Activated CD4-positive, alpha-beta T cell treated with anti-CD3 and anti-CD28 coated beads, Interleukin-2, amount 10 ng/mL, durations not matched to agents 24 days and 14 days (primary cell): ENCODE measurements at regions of chr11 and their contacts with region 1.

Region 1: GRCh38 chr11:4187055-4187988 is 92.7 kb downstream of the RRM1 start:
- DNase-seq: peak; percentile 96
- H3K4me3 Mint-ChIP-seq: peak overlapping the region; percentile 87
- H3K27ac Mint-ChIP-seq: peak overlapping the region; percentile 53
- H3K4me1 Mint-ChIP-seq: peaks cover 7% of the 10 kb centered on the region
- H3K27me3 Mint-ChIP-seq: peaks cover 2% of the 10 kb centered on the region

Region 2: DNA sequence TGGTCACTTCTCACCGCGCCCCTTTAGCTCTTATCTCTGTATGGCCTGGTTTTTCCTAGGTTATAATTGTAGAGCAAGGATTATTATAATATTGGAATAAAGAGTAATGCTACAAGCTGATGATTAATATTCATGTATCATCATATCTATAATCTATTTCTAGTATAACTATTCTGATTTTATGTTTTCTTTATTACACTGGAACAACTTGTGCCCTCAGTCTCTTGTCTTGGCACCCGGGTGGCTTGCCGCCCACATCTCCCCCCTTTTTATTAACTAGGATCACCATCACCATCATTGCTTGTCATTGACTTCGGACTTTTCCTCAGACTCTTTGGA is 306.1 kb after region 1 on chr11:
- intact Hi-C with region 1: loop called (anchors 1 kb)
- DNase-seq: no peak
- H3K4me3 Mint-ChIP-seq: no peak overlapping the region
- H3K27ac Mint-ChIP-seq: no peak overlapping the region
- H3K4me1 Mint-ChIP-seq: peaks cover 8% of the 10 kb centered on the region
- H3K27me3 Mint-ChIP-seq: peaks cover 18% of the 10 kb centered on the region

Region 3: GRCh38 chr11:4539603-4540219 is 352.4 kb after region 1 on chr11:
- intact Hi-C with region 1: loop called (anchors 1 kb)
- DNase-seq: peak; percentile 86
- H3K4me3 Mint-ChIP-seq: no peak overlapping the region
- H3K27ac Mint-ChIP-seq: no peak overlapping the region
- H3K4me1 Mint-ChIP-seq: peaks cover 1% of the 10 kb centered on the region
- H3K27me3 Mint-ChIP-seq: peaks cover 18% of the 10 kb centered on the region

Region 4: DNA sequence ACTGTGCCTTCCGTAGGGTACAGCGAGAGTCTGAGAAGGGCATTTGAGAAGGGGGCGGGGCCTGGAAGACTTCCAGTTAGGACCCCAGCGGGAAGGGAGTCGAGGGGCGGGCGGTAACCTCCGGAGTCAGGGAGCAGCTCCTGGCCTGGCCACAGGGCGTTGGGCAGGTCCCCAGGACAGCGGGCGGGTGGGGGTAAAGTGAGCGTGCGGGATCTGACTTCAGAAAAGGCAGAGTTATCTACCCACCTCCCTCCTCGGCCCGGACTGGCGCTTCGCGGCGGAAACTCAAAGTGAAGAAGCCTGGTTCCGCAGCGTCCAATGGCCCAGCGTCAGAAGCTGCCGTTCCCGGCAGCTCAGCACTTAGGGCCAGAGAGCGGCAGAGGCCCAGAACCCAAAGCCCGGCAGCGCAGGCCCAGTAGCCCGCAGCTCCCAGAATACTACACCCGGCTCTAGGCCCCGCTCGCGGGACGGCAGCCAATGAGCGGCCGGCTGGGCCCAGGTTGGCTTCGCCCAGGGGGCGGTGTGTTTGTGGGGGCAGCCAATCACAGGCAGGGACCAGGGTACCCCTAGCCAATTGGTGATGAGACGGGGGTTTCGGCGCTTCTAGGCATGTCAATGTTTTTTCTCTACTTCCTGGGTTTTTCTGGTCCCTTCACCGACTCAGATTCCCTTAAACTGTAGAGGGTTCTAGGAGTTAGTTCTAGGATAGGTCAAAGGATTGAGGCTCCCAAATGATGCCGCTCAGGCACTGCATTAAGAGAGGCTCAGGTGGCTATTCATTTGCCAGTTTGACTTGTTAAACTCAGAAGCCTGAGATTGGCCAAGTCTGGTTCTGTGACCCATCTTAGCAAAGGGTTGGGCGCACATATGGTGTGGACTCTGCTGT is 420.7 kb after region 1 on chr11 and contains the start of gene TRIM68:
- intact Hi-C with region 1: loop called (anchors 2 kb)
- DNase-seq: peak; percentile 98
- H3K4me3 Mint-ChIP-seq: peak within 1 kb of the TSS; percentile 89
- H3K27ac Mint-ChIP-seq: peak within 1 kb of the TSS; percentile 91
- H3K4me1 Mint-ChIP-seq: peaks cover 30% of the 10 kb centered on the region
- H3K27me3 Mint-ChIP-seq: no peaks in the 10 kb centered on the region
- total RNA-seq, gene TRIM68: 8.7 and 11.3 TPM in 2 replicates

Region 5: GRCh38 chr11:4636962-4637661 is 449.8 kb after region 1 on chr11 and contains the start of gene OR51D1:
- intact Hi-C with region 1: loop called (anchors 1 kb)
- DNase-seq: peak; percentile 90
- H3K4me3 Mint-ChIP-seq: no peak within 1 kb of the TSS
- H3K27ac Mint-ChIP-seq: no peak within 1 kb of the TSS
- H3K4me1 Mint-ChIP-seq: no peaks in the 10 kb centered on the region
- H3K27me3 Mint-ChIP-seq: no peaks in the 10 kb centered on the region
- total RNA-seq, gene OR51D1: not detected in 2 replicates

Region 6: GRCh38 chr11:5004424-5005274 is 817.3 kb after region 1 on chr11:
- intact Hi-C with region 1: loop called (anchors 5 kb)
- DNase-seq: peak; percentile 74
- H3K4me3 Mint-ChIP-seq: no peak overlapping the region
- H3K27ac Mint-ChIP-seq: no peak overlapping the region
- H3K4me1 Mint-ChIP-seq: no peaks in the 10 kb centered on the region
- H3K27me3 Mint-ChIP-seq: no peaks in the 10 kb centered on the region